Activated CD4-positive, alpha-beta T cell treated with anti-CD3 and anti-CD28 coated beads for 36 hours (primary cell): ENCODE measurements at regions of chr6 and their contacts with region 1.

Region 1: DNA sequence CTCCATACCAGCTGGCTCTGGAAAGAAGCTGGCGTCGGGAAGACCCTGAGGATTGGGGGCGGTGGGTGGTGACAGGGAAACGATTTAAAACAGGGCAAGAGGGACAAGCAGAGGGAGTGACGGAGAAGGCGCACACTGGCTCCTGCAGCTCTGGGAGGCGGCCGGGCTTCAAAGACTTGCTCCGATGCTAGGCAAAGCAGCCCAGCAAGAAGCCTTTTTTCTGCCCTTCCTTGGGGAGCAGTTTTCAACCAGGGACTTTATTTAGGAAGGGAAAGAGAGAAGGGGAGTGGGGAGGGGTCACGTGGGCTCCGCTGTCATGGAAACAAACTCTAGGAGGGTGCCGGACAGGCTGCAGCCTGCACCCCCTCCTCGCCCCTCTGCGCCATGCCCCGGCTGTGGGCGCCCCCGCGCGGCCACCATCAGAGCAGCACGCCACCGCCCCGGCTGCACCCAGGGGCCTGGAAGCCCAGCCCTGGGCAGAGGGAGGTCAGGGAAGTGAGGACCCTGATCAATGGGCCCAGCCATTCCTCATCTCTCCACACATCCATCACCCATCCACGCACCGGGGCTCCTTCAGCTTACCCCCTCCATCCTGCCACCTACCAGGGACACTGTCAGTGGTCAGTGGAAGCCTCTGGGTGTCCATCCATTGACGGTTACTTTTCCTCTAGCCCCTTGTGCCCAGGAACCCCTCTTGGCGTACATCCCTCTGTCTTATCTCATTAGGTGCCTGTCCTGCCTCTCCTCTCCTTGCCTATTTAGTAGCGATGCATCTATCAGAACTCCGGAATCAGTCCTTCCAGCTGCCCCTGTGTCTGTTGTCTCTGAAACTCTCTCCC is 66.6 kb upstream of the CCDC167 start:
- DNase-seq: peak; percentile 84
- ATAC-seq: peak; percentile 93
- H3K4me3 Mint-ChIP-seq: no peak overlapping the region
- H3K27ac Mint-ChIP-seq: no peak overlapping the region
- H3K4me1 Mint-ChIP-seq: peaks cover 11% of the 10 kb centered on the region
- H3K27me3 Mint-ChIP-seq: peaks cover 4% of the 10 kb centered on the region

Region 2: GRCh38 chr6:37381579-37381978 is 184.8 kb before region 1 on chr6:
- CTCF ChIA-PET with region 1: interaction called, 16 read pairs
- POLR2A ChIA-PET with region 1: no interaction called
- intact Hi-C with region 1: loop called (anchors 1 to 5 kb)
- DNase-seq: peak; percentile 31
- ATAC-seq: peak; percentile 68
- H3K4me3 Mint-ChIP-seq: no peak overlapping the region
- H3K27ac Mint-ChIP-seq: no peak overlapping the region
- H3K4me1 Mint-ChIP-seq: no peaks in the 10 kb centered on the region
- H3K27me3 Mint-ChIP-seq: no peaks in the 10 kb centered on the region

Region 3: GRCh38 chr6:37489660-37490361 is 76.5 kb before region 1 on chr6:
- CTCF ChIA-PET with region 1: interaction called, 20 read pairs
- POLR2A ChIA-PET with region 1: no interaction called
- intact Hi-C with region 1: loop called in 1 of 2 experiments (anchors 1 kb)
- DNase-seq: peak; percentile 42
- ATAC-seq: no peak
- H3K4me3 Mint-ChIP-seq: no peak overlapping the region
- H3K27ac Mint-ChIP-seq: peak overlapping the region; percentile 58
- H3K4me1 Mint-ChIP-seq: peaks cover 67% of the 10 kb centered on the region
- H3K27me3 Mint-ChIP-seq: no peaks in the 10 kb centered on the region

Region 4: DNA sequence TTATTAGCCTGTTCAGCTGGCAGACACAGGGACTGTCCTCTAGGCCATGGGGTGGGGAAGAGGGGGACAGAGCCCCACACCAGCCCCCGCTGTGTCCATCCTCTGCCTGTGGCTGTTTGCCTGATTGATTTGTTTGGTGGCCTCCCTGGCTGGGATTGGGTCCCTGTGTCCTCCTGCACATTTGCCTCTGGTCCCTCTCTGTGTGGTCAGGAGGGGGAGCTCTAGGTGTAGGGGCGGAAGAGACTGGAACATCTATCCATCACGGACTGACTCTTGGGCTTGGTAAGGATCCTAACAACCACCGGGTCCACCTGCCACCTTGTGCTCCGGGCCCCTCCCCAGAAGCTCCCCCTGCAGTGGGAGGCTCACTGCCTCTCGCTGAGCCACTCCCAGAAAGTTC is 28.2 kb before region 1 on chr6:
- CTCF ChIA-PET with region 1: interaction called, 10 read pairs
- POLR2A ChIA-PET with region 1: no interaction called
- intact Hi-C with region 1: loop called in 1 of 2 experiments (anchors 2 kb)
- DNase-seq: peak; percentile 39
- ATAC-seq: peak; percentile 24
- H3K4me3 Mint-ChIP-seq: no peak overlapping the region
- H3K27ac Mint-ChIP-seq: no peak overlapping the region
- H3K4me1 Mint-ChIP-seq: peaks cover 20% of the 10 kb centered on the region
- H3K27me3 Mint-ChIP-seq: no peaks in the 10 kb centered on the region

Region 5: GRCh38 chr6:37646986-37647764 is 80.8 kb after region 1 on chr6:
- CTCF ChIA-PET with region 1: no interaction called
- POLR2A ChIA-PET with region 1: no interaction called
- intact Hi-C with region 1: no loop called
- DNase-seq: no peak
- ATAC-seq: no peak
- H3K4me3 Mint-ChIP-seq: no peak overlapping the region
- H3K27ac Mint-ChIP-seq: no peak overlapping the region
- H3K4me1 Mint-ChIP-seq: peaks cover 31% of the 10 kb centered on the region
- H3K27me3 Mint-ChIP-seq: peaks cover 21% of the 10 kb centered on the region

Region 6: GRCh38 chr6:37691904-37692806 is 125.8 kb after region 1 on chr6:
- CTCF ChIA-PET with region 1: interaction called, 3 read pairs
- POLR2A ChIA-PET with region 1: no interaction called
- intact Hi-C with region 1: loop called in 1 of 2 experiments (anchors 1 kb)
- DNase-seq: peak; percentile 88
- ATAC-seq: peak; percentile 88
- H3K4me3 Mint-ChIP-seq: no peak overlapping the region
- H3K27ac Mint-ChIP-seq: no peak overlapping the region
- H3K4me1 Mint-ChIP-seq: peaks cover 23% of the 10 kb centered on the region
- H3K27me3 Mint-ChIP-seq: peaks cover 38% of the 10 kb centered on the region